Endothelial cell of umbilical vein (primary cell): ENCODE measurements at regions of chr1 and their contacts with region 1.

Region 1: GRCh38 chr1:35930593-35931445 is at the start of gene AGO3:
- DNase-seq: peak; percentile 74
- H3K4me3 ChIP-seq: peak within 1 kb of the TSS; percentile 82 to 95 (median 88)
- H3K27ac ChIP-seq: peak within 1 kb of the TSS; percentile 83
- H3K4me1 ChIP-seq: peaks cover 16% of the 10 kb centered on the region
- H3K27me3 ChIP-seq: no peaks in the 10 kb centered on the region
- CTCF ChIP-seq: no peak
- POLR2A ChIP-seq: peak; percentile 93
- total RNA-seq, gene AGO3: 21.1 and 24.1 TPM in 2 replicates

Region 2: GRCh38 chr1:35882945-35883634 is 47.7 kb before region 1 on chr1 and contains the start of gene AGO1:
- CTCF ChIA-PET with region 1: interaction called, 4 read pairs
- POLR2A ChIA-PET with region 1: no interaction called
- dilution Hi-C with region 1: no loop called
- intact Hi-C with region 1: loop called (anchors 1 kb)
- DNase-seq: peak; percentile 94
- H3K4me3 ChIP-seq: peak within 1 kb of the TSS; percentile 71 to 100 (median 88)
- H3K27ac ChIP-seq: no peak within 1 kb of the TSS
- H3K4me1 ChIP-seq: peaks cover 17% of the 10 kb centered on the region
- H3K27me3 ChIP-seq: no peaks in the 10 kb centered on the region
- CTCF ChIP-seq: peak; percentile 98 to 99
- POLR2A ChIP-seq: peak; percentile 92
- total RNA-seq, gene AGO1: 31.0 TPM in 2 replicates

Region 3: DNA sequence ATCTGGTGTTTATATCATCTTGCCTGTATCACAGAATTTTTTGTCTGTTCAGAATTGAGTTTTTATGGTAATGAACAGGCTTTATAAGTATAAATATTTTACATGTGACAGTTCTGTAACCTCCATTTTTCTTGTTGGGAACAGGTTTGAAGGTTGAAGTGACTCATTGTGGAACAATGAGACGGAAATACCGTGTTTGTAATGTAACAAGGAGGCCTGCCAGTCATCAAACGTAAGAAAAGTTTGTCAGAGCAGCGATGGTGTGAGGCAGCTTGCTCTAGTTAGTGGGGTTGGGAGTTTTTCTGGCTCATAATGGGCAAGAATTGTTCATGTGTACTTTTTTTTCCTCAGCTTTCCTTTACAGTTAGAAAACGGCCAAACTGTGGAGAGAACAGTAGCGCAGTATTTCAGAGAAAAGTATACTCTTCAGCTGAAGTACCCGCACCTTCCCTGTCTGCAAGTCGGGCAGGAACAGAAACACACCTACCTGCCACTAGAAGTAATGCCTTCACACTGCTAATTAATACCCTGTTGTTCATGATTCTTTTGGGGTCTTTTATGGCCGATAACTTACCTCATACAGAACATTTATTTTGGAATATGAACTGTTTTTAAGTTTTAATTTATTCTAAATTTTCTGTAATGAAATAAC is 77.9 kb after region 1 on chr1:
- CTCF ChIA-PET with region 1: no interaction called
- POLR2A ChIA-PET with region 1: no interaction called
- dilution Hi-C with region 1: no loop called
- intact Hi-C with region 1: loop called (anchors 2 kb)
- DNase-seq: peak; percentile 82
- H3K4me3 ChIP-seq: no peak overlapping the region
- H3K27ac ChIP-seq: peak overlapping the region; percentile 96
- H3K4me1 ChIP-seq: peaks cover 17% of the 10 kb centered on the region
- H3K27me3 ChIP-seq: no peaks in the 10 kb centered on the region
- CTCF ChIP-seq: no peak
- POLR2A ChIP-seq: no peak

Region 4: GRCh38 chr1:36088575-36089443 is 158.0 kb after region 1 on chr1 and contains the start of gene ADPRS:
- CTCF ChIA-PET with region 1: no interaction called
- POLR2A ChIA-PET with region 1: no interaction called
- dilution Hi-C with region 1: no loop called
- intact Hi-C with region 1: loop called (anchors 1 kb)
- DNase-seq: peak; percentile 91
- H3K4me3 ChIP-seq: peak within 1 kb of the TSS; percentile 68 to 96 (median 83)
- H3K27ac ChIP-seq: peak within 1 kb of the TSS; percentile 35
- H3K4me1 ChIP-seq: peaks cover 8% of the 10 kb centered on the region
- H3K27me3 ChIP-seq: no peaks in the 10 kb centered on the region
- CTCF ChIP-seq: peak; percentile 98 to 100
- POLR2A ChIP-seq: peak; percentile 95
- total RNA-seq, gene ADPRS: 32.9 and 33.9 TPM in 2 replicates